Activated CD4-positive, alpha-beta T cell treated with anti-CD3 and anti-CD28 coated beads, Interleukin-2, amount 10 ng/mL, durations not matched to agents 24 days and 14 days (primary cell): ENCODE measurements at regions of chr12 and their contacts with region 1.

Region 1: GRCh38 chr12:8078398-8078797 is 3.7 kb upstream of the NECAP1 start:
- DNase-seq: peak; percentile 84
- H3K4me3 Mint-ChIP-seq: no peak overlapping the region
- H3K27ac Mint-ChIP-seq: no peak overlapping the region
- H3K4me1 Mint-ChIP-seq: peaks cover 19% of the 10 kb centered on the region
- H3K27me3 Mint-ChIP-seq: no peaks in the 10 kb centered on the region

Region 2: GRCh38 chr12:7859552-7859951 is 218.8 kb before region 1 on chr12:
- intact Hi-C with region 1: loop called (anchors 5 kb)
- DNase-seq: no peak
- H3K4me3 Mint-ChIP-seq: no peak overlapping the region
- H3K27ac Mint-ChIP-seq: no peak overlapping the region
- H3K4me1 Mint-ChIP-seq: peaks cover 10% of the 10 kb centered on the region
- H3K27me3 Mint-ChIP-seq: peaks cover 14% of the 10 kb centered on the region

Region 3: DNA sequence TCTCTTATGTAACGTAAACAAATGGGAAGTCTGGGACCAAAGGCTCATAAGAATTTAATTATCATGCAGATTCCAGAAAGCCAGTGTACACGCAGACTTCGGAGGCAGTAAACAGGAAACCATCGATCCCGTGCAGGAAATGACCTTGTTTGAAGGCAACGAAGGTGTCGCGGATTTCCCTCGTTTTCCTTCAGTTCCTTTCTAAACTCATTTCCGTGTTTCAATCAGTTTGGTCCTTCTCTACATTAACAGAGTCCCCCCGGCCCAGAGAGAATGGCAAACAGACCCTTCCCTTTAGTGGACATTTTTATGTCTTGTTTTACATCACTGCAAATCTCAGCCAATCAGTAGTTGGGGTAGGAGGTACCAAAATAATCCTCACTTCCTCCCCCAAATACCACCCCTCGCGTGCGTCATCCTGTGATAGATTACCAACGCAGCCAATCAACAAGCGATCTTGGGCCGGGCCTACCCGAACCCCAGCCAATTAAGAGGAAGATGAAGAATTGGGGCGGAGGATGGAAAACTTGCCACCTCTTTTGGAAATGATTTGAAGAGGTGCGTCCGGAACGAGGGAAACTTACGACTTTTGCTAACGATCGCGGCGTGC is 52.0 kb before region 1 on chr12:
- intact Hi-C with region 1: loop called (anchors 1 kb)
- DNase-seq: peak; percentile 99
- H3K4me3 Mint-ChIP-seq: peak overlapping the region; percentile 91
- H3K27ac Mint-ChIP-seq: peak overlapping the region; percentile 100
- H3K4me1 Mint-ChIP-seq: peaks cover 18% of the 10 kb centered on the region
- H3K27me3 Mint-ChIP-seq: no peaks in the 10 kb centered on the region

Region 4: DNA sequence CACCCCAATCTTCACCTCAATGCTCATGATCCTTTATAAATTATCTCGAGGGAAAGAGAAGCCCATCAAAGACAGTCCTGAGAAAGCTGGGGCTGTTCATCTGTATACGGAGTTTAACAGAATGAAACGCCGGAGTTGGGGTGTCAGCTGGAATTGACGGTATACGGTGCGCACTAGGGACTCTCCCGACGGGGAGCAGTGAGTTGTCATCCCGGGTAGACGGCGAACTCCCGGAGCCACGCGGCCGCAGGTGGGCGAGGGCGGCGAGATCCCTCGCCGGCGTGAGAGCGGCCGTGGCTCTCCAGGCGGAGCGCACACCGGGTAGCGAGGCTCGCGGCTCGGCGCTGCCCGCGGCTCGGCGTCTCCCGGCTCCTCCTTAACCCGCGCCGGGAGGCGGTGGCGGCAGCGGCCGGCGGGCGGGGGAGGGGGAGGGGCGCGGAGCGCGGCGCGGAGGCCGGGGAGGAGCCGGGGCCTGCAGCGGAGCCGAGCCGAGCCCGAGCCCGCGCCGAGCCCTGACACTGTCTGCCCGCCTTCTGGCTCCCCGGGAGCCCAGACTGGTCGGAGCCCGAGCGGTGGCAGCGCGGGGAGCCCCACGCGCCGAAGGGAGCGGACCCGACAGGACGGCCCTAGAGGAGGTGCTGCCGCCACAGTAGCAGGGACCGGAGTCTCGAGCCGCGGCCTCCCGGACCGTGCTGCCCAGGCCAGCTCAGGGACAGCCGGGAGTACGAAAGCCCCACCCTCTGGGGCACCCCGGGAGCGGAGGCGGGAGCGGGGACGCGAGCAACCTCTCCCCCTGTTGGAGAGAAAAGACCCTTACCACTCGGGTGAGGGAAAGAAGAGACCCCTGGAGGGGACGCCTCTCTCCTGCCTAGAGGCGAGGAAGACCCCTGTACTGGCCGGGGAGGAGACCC is 45.9 kb before region 1 on chr12 and contains the start of gene FOXJ2:
- intact Hi-C with region 1: loop called (anchors 1 kb)
- DNase-seq: peak; percentile 93
- H3K4me3 Mint-ChIP-seq: peak within 1 kb of the TSS; percentile 88
- H3K27ac Mint-ChIP-seq: peak within 1 kb of the TSS; percentile 85
- H3K4me1 Mint-ChIP-seq: peaks cover 49% of the 10 kb centered on the region
- H3K27me3 Mint-ChIP-seq: no peaks in the 10 kb centered on the region
- total RNA-seq, gene FOXJ2: 18.5 and 18.6 TPM in 2 replicates

Region 5: GRCh38 chr12:8045952-8046944 is 32.1 kb before region 1 on chr12:
- intact Hi-C with region 1: loop called (anchors 1 kb)
- DNase-seq: peak; percentile 93
- H3K4me3 Mint-ChIP-seq: no peak overlapping the region
- H3K27ac Mint-ChIP-seq: no peak overlapping the region
- H3K4me1 Mint-ChIP-seq: peaks cover 6% of the 10 kb centered on the region
- H3K27me3 Mint-ChIP-seq: no peaks in the 10 kb centered on the region

Region 6: GRCh38 chr12:8065991-8066594 is 12.3 kb before region 1 on chr12 and contains the start of gene C3AR1:
- intact Hi-C with region 1: loop called (anchors 1 kb)
- DNase-seq: peak; percentile 86
- H3K4me3 Mint-ChIP-seq: peak within 1 kb of the TSS; percentile 41
- H3K27ac Mint-ChIP-seq: peak within 1 kb of the TSS; percentile 78
- H3K4me1 Mint-ChIP-seq: peaks cover 33% of the 10 kb centered on the region
- H3K27me3 Mint-ChIP-seq: no peaks in the 10 kb centered on the region
- total RNA-seq, gene C3AR1: 0.56 and 0.73 TPM in 2 replicates

Region 7: DNA sequence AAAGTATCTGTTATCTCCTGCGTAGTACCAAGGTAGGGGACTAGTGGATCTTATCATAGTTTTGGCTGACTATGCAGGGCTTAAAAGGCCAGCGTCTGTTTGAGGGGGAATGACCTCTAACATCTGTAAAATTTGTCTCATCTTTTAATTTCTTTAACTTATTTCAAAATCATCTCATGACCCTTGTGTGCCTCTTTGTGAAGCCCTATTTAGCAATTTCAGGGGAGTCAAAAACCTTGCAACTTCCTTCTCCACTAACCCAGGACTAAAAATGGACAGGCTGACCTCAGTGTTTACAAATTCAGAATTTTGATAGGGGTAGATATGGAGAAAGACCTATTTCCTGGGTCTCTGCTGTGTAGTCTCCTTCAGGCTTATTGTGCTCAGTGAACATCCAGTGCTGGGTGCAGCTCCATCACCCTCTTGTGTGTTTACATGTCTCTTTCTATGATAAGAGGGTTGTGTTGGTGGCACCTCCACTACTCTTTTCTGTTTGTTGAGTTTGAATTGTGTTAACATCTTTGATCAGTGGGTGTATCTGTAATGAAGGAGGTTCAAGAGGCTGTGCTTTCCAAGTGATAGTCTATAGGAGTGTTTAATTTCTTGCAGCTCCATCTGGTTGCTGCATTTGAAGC is 18.0 kb after region 1 on chr12:
- intact Hi-C with region 1: no loop called
- DNase-seq: no peak
- H3K4me3 Mint-ChIP-seq: no peak overlapping the region
- H3K27ac Mint-ChIP-seq: peak overlapping the region; percentile 5
- H3K4me1 Mint-ChIP-seq: peaks cover 7% of the 10 kb centered on the region
- H3K27me3 Mint-ChIP-seq: no peaks in the 10 kb centered on the region